K562 (cell line): ENCODE measurements at regions of chr15 and their contacts with region 1.

Region 1: GRCh38 chr15:74291101-74292071 is 55.3 kb downstream of the CCDC33 start:
- DNase-seq: peak; percentile 84 to 91 (median 88)
- ATAC-seq: peak; percentile 97
- H3K4me3 ChIP-seq: no peak overlapping the region
- H3K27ac ChIP-seq: peak overlapping the region; percentile 57; the same call in 1 of the 3 replicates
- H3K4me1 ChIP-seq: peaks cover 5 to 13% of the 10 kb centered on the region in 2 experiments; a peak in 4 of 5 replicates
- H3K27me3 ChIP-seq: 0 out of 5 replicates have a peak, but pooled peaks cover 0 to 5% of the 10 kb centered on the region in 2 experiments
- CTCF ChIP-seq: no peak
- EP300 ChIP-seq: peak; percentile 66; the same call in 1 of the 2 replicates
- POLR2A ChIP-seq: no peak
- RAD21 ChIP-seq: no peak

Region 2: GRCh38 chr15:74222240-74223119 is 68.9 kb before region 1 on chr15:
- CTCF ChIA-PET with region 1: no interaction called
- POLR2A ChIA-PET with region 1: no interaction called
- in situ Hi-C with region 1: no loop called
- intact Hi-C with region 1: no loop called
- DNase-seq: no peak
- ATAC-seq: no peak
- H3K4me3 ChIP-seq: no peak overlapping the region
- H3K27ac ChIP-seq: no peak overlapping the region
- H3K4me1 ChIP-seq: no peaks in the 10 kb centered on the region
- H3K27me3 ChIP-seq: peaks cover 3 to 58% of the 10 kb centered on the region in 2 experiments; a peak in 3 of 5 replicates
- CTCF ChIP-seq: no peak
- EP300 ChIP-seq: no peak
- POLR2A ChIP-seq: no peak
- RAD21 ChIP-seq: no peak

Region 3: GRCh38 chr15:74240002-74240568 is 51.3 kb before region 1 on chr15:
- CTCF ChIA-PET with region 1: no interaction called
- POLR2A ChIA-PET with region 1: interaction called, 3 read pairs
- in situ Hi-C with region 1: no loop called
- intact Hi-C with region 1: loop called (anchors 10 kb)
- DNase-seq: no peak
- ATAC-seq: no peak
- H3K4me3 ChIP-seq: no peak overlapping the region
- H3K27ac ChIP-seq: no peak overlapping the region
- H3K4me1 ChIP-seq: peaks cover 0 to 3% of the 10 kb centered on the region in 2 experiments; a peak in 1 of 5 replicates
- H3K27me3 ChIP-seq: peaks cover 11 to 42% of the 10 kb centered on the region in 2 experiments; a peak in 4 of 5 replicates
- CTCF ChIP-seq: no peak
- EP300 ChIP-seq: no peak
- POLR2A ChIP-seq: no peak
- RAD21 ChIP-seq: no peak

Region 4: DNA sequence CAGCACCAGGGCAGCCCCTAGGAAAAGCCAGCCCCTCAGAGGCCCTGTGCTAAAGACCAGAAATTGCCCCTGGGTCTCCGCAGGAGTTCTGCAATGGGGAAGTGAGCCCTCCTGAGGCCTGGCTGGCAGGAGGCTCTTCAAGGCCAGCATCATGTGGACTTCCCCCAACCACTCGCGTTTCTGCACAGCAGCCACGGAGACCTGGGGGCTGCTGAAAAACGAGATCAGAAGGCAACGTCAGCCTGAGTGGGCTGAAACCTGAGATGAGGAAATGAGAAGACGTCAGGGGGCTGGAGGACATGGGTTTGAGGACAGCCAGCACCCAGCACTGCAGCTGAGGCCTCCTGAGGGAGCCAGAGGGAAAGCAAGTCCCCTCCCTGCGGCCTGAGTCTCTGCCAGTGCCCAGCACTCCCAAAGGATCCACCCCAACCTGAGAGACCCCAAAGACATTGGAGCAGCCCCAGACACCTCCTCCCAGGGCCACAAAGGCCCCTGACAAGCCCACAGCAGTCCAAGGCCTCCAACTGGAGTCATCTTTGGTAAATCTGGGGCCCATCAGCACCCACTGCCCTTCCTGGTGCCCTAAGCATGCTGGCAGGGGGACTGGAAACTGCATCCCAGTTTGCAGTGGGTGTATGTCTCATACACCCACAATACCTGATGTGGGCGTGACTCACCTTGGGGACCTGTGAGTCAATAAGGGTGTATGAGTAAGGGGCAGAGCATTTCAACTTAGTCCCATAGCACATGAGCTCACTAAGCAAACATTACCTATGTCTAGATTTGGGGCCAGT is 105.3 kb after region 1 on chr15:
- CTCF ChIA-PET with region 1: no interaction called
- POLR2A ChIA-PET with region 1: no interaction called
- in situ Hi-C with region 1: no loop called
- intact Hi-C with region 1: no loop called
- DNase-seq: no peak
- ATAC-seq: no peak
- H3K4me3 ChIP-seq: no peak overlapping the region
- H3K27ac ChIP-seq: 0 out of 3 replicates have a peak overlapping the region, but pooled peaks have one; percentile 22
- H3K4me1 ChIP-seq: peaks cover 50 to 66% of the 10 kb centered on the region in 2 experiments
- H3K27me3 ChIP-seq: no peaks in the 10 kb centered on the region
- CTCF ChIP-seq: 0 out of 6 replicates have a peak, but pooled peaks of 1 of the 3 experiments have one; percentile 4
- EP300 ChIP-seq: no peak
- POLR2A ChIP-seq: no peak
- RAD21 ChIP-seq: no peak

Region 5: GRCh38 chr15:74489518-74490338 is 198.3 kb after region 1 on chr15:
- CTCF ChIA-PET with region 1: no interaction called
- POLR2A ChIA-PET with region 1: no interaction called
- in situ Hi-C with region 1: no loop called
- intact Hi-C with region 1: no loop called
- DNase-seq: peak; percentile 79 to 85 (median 82)
- ATAC-seq: peak; percentile 98
- H3K4me3 ChIP-seq: no peak overlapping the region
- H3K27ac ChIP-seq: peak overlapping the region; percentile 20; the same call in 1 of the 3 replicates
- H3K4me1 ChIP-seq: peaks cover 3 to 4% of the 10 kb centered on the region in 2 experiments; a peak in 3 of 5 replicates
- H3K27me3 ChIP-seq: no peaks in the 10 kb centered on the region
- CTCF ChIP-seq: peak; percentile 64 to 73 (median 68)
- EP300 ChIP-seq: no peak
- POLR2A ChIP-seq: no peak
- RAD21 ChIP-seq: peak; percentile 48 to 66

Region 6: GRCh38 chr15:74631408-74632247 is 340.2 kb after region 1 on chr15:
- CTCF ChIA-PET with region 1: no interaction called
- POLR2A ChIA-PET with region 1: no interaction called
- in situ Hi-C with region 1: no loop called
- intact Hi-C with region 1: no loop called
- DNase-seq: peak; percentile 72 to 82 (median 78)
- ATAC-seq: peak; percentile 87
- H3K4me3 ChIP-seq: no peak overlapping the region
- H3K27ac ChIP-seq: no peak overlapping the region
- H3K4me1 ChIP-seq: no peaks in the 10 kb centered on the region; a peak in 1 of 5 replicates
- H3K27me3 ChIP-seq: no peaks in the 10 kb centered on the region
- CTCF ChIP-seq: peak; percentile 81 to 94 (median 89)
- EP300 ChIP-seq: no peak
- POLR2A ChIP-seq: no peak
- RAD21 ChIP-seq: peak; percentile 54 to 78